KBM-7 (cell line): ENCODE measurements at regions of chr20 and their contacts with region 1.

Region 1: GRCh38 chr20:41078329-41078728 is 49.7 kb downstream of the TOP1 start:
- DNase-seq: peak; percentile 32

Region 2: GRCh38 chr20:40908309-40908708 is 170.0 kb before region 1 on chr20:
- in situ Hi-C with region 1: no loop called
- DNase-seq: no peak

Region 3: GRCh38 chr20:40980106-40980827 is 98.1 kb before region 1 on chr20:
- in situ Hi-C with region 1: loop called (anchors 10 kb)
- DNase-seq: no peak